Activated CD8-positive, alpha-beta T cell treated with anti-CD3 and anti-CD28 coated beads, Interleukin-2, amount 10 ng/mL, durations not matched to agents 7 days and 5 days (primary cell): ENCODE measurements at regions of chr1 and their contacts with region 1.

Region 1: GRCh38 chr1:206808615-206809014 is 36.3 kb upstream of the IL10 start:
- DNase-seq: peak; percentile 73
- ATAC-seq: peak; percentile 86
- H3K4me3 Mint-ChIP-seq: no peak overlapping the region
- H3K27ac Mint-ChIP-seq: peak overlapping the region; percentile 7
- H3K4me1 Mint-ChIP-seq: peaks cover 49% of the 10 kb centered on the region
- H3K27me3 Mint-ChIP-seq: no peaks in the 10 kb centered on the region

Region 2: DNA sequence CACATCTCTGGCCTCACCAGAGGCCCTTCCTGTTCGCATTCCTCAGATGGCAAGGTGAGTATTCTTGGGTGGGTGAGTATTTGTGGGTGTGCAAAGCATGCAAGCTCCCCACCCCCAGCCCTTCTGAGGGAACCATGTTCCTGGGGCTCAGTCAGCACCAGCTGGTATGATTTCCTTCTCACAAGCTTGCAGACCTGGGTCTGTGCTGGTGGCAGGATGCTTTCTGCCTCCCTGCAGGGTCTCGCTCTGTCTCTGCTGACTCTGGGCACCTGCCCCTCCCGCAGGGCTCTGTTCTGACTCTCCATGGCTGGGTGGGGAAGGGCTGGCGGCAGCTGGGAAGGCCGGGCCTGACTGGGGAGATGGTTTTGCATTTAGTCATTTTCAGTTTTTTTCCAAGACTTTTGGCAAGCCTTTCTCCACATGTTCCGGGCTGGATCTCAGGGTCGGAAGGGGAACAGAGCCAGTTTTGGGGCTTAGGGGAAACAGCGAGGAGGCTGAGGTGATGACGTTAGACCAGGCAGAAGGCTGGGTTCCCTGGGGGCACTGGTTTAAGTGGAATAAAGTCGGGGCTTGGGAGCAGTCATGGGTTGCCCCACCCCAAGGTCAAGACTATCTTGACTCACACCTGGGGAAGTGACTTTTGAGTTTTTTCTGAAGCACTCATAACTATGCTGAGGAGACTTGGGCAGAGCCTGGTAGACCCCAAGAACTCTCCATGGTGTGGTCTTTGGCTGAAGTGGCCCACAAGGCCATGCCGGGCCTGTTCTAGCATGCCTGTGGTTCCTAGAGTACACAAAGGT is 295.1 kb before region 1 on chr1:
- CTCF ChIA-PET with region 1: no interaction called
- POLR2A ChIA-PET with region 1: no interaction called
- DNase-seq: no peak
- ATAC-seq: no peak
- H3K4me3 Mint-ChIP-seq: no peak overlapping the region
- H3K27ac Mint-ChIP-seq: no peak overlapping the region
- H3K4me1 Mint-ChIP-seq: peaks cover 7% of the 10 kb centered on the region
- H3K27me3 Mint-ChIP-seq: peaks cover 28% of the 10 kb centered on the region

Region 3: DNA sequence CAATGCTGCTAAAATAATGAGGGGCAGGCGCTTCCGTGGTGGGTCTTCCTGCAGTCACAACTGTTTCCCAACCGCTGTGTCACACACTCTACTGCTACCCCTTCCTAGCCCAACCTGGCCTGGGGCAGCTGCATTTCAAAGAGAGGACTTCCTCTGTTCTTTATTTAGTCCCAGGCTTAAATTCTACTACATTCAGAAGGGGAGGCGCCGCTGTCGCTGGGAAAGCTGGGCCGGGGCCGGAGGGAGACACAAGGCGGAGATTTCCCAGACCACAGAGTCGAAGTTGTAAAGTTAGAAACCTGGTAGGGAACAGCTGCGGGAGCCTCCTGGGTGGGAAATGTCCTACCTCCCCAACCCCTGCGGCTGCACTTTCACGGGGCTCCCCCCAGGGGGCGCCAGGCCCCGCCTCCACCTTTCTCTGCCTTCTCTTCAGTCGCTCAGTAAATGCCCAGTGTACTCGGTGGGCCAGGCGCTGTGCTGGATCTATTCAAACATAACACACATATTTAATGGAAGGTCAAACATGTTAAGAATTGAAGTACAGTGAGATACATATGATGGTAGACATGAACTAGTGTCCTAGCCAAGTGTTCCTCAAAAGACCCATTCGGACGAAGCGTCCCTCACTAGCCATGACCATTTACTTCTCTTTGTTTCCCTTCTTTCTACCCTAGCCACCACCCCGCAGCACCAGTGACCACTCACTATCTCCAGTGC is 150.2 kb before region 1 on chr1:
- CTCF ChIA-PET with region 1: interaction called, 13 read pairs
- POLR2A ChIA-PET with region 1: no interaction called
- DNase-seq: peak; percentile 71
- ATAC-seq: peak; percentile 84
- H3K4me3 Mint-ChIP-seq: no peak overlapping the region
- H3K27ac Mint-ChIP-seq: no peak overlapping the region
- H3K4me1 Mint-ChIP-seq: peaks cover 21% of the 10 kb centered on the region
- H3K27me3 Mint-ChIP-seq: peaks cover 34% of the 10 kb centered on the region

Region 4: GRCh38 chr1:206734499-206735142 is 74.0 kb before region 1 on chr1:
- CTCF ChIA-PET with region 1: interaction called, 724 read pairs
- POLR2A ChIA-PET with region 1: interaction called, 11 read pairs
- DNase-seq: peak; percentile 74
- ATAC-seq: peak; percentile 28
- H3K4me3 Mint-ChIP-seq: no peak overlapping the region
- H3K27ac Mint-ChIP-seq: peak overlapping the region; percentile 44
- H3K4me1 Mint-ChIP-seq: peaks cover 70% of the 10 kb centered on the region
- H3K27me3 Mint-ChIP-seq: no peaks in the 10 kb centered on the region

Region 5: DNA sequence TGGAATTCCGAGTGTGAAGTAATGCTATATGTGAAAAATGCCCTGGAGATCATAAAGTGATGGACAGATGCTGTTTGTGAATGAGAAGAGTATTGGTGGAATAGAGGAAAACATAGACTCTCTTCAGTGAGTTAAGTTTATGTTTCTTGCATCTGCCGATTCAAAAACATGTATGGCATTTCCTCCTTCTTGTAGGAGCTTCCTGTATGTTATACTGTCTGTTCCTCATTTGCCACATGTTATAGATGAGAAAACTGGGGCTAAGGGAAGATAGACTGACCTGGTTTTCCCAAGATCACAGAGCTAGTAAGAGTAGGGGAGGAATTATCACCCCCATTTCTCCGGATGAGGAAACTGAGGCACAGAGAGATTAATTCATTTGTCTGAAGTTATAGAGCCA is 15.7 kb after region 1 on chr1:
- CTCF ChIA-PET with region 1: interaction called, 118 read pairs
- POLR2A ChIA-PET with region 1: interaction called, 3 read pairs
- DNase-seq: no peak
- ATAC-seq: no peak
- H3K4me3 Mint-ChIP-seq: no peak overlapping the region
- H3K27ac Mint-ChIP-seq: no peak overlapping the region
- H3K4me1 Mint-ChIP-seq: peaks cover 40% of the 10 kb centered on the region
- H3K27me3 Mint-ChIP-seq: no peaks in the 10 kb centered on the region

Region 6: DNA sequence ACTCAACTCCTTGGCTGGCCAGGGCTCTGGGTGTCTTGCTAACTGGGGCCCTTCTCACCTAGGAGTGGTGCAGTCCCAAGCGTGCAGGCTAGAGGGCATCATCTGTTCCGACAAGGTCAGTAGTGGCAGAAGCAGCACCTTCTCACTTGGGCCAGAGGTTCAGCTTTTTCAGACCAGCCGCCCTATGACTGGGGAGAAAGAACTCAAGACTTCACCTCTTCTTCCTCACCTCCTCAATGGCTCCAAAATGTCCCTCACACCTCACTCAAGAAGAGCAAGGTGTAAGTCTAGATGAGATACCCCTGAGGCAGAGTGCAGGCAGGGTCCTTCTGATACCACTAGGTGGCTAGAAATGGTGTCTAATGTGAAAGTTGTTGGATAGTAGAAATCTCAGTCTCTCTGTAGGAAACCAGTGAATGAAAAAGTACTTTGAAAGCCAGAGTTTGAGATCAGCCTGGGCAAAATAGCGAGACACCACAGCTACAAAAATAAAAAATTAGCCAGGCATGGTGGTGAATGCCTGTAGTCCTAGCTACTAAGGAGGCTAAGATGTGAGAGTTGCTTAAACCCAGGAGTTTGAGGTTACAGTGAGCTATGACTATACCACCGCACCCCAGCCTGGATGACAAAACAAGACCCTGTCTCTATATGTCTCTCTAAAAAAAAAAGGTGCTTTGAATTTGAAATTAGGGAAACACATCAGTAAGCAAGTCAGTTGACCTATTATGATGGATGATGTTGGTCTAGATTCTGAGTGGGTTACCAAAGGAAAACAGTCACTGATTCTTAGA is 48.3 kb after region 1 on chr1:
- CTCF ChIA-PET with region 1: interaction called, 22 read pairs
- POLR2A ChIA-PET with region 1: no interaction called
- DNase-seq: no peak
- ATAC-seq: peak; percentile 53
- H3K4me3 Mint-ChIP-seq: no peak overlapping the region
- H3K27ac Mint-ChIP-seq: no peak overlapping the region
- H3K4me1 Mint-ChIP-seq: peaks cover 15% of the 10 kb centered on the region
- H3K27me3 Mint-ChIP-seq: peaks cover 25% of the 10 kb centered on the region

Region 7: DNA sequence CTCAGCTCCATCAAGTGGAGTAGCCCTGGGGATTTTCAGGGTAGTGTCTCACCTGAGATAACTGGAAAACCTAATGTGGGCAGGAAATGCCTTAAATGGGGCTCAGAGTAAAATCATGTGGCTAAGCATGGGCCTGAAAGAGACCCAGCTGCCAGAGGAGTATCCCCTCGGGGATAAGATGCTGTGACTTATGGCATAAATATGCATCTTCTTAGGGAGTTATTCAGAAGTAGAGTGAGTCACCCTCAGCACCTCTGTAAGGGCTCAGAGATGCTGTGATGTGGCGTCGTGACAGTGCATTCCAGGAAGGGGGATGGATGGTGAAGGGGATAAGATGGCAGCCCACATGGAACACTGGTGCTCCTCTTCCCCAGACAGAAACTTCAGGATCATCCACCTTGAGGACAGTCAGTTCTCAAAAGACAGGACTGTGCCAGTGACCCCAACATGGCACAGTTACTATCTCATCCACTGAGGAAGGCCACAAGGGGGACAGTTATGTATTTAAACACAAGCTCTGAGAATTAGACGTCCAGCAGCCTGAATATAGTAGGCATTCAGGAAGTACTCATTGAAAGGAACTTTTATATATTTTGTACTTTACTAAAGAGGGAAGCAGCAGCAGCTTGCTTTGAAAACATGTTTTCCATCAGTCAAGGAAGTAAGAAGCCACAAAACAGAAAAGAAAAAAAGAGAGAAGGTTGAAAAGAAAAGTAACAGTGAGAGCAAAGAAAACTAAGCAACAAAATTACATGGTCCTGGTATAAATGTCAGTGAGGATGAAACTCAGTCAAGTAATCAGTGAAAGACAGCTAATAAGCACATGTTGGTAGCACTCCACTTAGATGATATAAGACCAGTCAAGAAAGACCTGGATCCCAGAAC is 96.9 kb after region 1 on chr1:
- CTCF ChIA-PET with region 1: interaction called, 47 read pairs
- POLR2A ChIA-PET with region 1: interaction called, 5 read pairs
- DNase-seq: no peak
- ATAC-seq: peak; percentile 28
- H3K4me3 Mint-ChIP-seq: peak overlapping the region; percentile 0
- H3K27ac Mint-ChIP-seq: peak overlapping the region; percentile 73
- H3K4me1 Mint-ChIP-seq: peaks cover 45% of the 10 kb centered on the region
- H3K27me3 Mint-ChIP-seq: no peaks in the 10 kb centered on the region

Region 8: GRCh38 chr1:206935491-206936067 is 127.0 kb after region 1 on chr1:
- CTCF ChIA-PET with region 1: interaction called, 59 read pairs
- POLR2A ChIA-PET with region 1: no interaction called
- DNase-seq: peak; percentile 64
- ATAC-seq: peak; percentile 77
- H3K4me3 Mint-ChIP-seq: no peak overlapping the region
- H3K27ac Mint-ChIP-seq: no peak overlapping the region
- H3K4me1 Mint-ChIP-seq: peaks cover 34% of the 10 kb centered on the region
- H3K27me3 Mint-ChIP-seq: peaks cover 2% of the 10 kb centered on the region